HEK293 (cell line): ENCODE measurements at regions of chr14 and their contacts with region 1.

Region 1: GRCh38 chr14:20530771-20531571 is 25.6 kb downstream of the RNASE10 start:
- H3K4me3 ChIP-seq: no peak overlapping the region
- H3K27ac ChIP-seq: no peak overlapping the region
- H3K4me1 ChIP-seq: no peaks in the 10 kb centered on the region
- CTCF ChIP-seq: peak; percentile 55

Region 2: GRCh38 chr14:20400965-20401593 is 129.9 kb before region 1 on chr14:
- CTCF ChIA-PET with region 1: no interaction called
- POLR2A ChIA-PET with region 1: no interaction called
- H3K4me3 ChIP-seq: no peak overlapping the region
- H3K27ac ChIP-seq: no peak overlapping the region
- H3K4me1 ChIP-seq: no peaks in the 10 kb centered on the region
- CTCF ChIP-seq: no peak

Region 3: GRCh38 chr14:20546877-20547276 is 15.9 kb after region 1 on chr14:
- CTCF ChIA-PET with region 1: interaction called, 17 read pairs
- POLR2A ChIA-PET with region 1: no interaction called
- H3K4me3 ChIP-seq: no peak overlapping the region
- H3K27ac ChIP-seq: no peak overlapping the region
- H3K4me1 ChIP-seq: no peaks in the 10 kb centered on the region
- CTCF ChIP-seq: no peak

Region 4: DNA sequence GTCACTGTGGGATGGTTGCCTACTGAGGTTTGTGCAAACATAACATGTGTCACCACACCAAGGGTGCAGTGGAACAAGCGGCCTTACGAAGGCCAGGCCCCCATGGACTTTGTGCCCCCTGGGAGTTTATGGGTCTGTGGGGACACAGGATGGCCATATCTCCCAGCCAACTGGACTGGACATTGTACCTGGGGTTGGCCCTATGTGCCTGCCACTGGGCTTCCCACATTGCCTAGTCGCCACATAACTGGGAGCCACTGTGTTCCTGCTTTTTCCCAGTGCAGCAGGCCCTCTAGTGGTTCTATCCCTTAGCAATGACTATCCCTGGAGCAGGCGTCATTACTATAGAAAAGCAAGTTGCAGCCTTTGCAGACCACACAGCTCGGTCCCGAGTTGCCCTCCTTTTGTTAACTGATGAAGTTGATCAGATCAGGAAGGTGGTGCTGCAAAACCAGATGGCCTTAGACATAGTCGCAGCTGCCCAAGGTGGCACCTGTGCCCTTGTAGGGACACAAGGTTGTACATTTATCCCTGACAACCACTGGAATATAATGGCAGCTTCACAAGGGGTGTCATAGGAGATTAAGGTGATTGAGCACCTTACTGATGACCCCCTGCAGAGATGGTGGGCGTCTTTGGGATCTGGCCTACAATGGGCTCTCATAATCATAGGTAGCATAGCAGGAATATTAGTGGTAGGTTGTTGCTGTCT is 75.4 kb after region 1 on chr14:
- CTCF ChIA-PET with region 1: interaction called, 18 read pairs
- POLR2A ChIA-PET with region 1: no interaction called
- H3K4me3 ChIP-seq: no peak overlapping the region
- H3K27ac ChIP-seq: no peak overlapping the region
- H3K4me1 ChIP-seq: peaks cover 4% of the 10 kb centered on the region; the same call in 1 of the 2 replicates
- CTCF ChIP-seq: peak; percentile 39; the same call in 1 of the 2 replicates

Region 5: DNA sequence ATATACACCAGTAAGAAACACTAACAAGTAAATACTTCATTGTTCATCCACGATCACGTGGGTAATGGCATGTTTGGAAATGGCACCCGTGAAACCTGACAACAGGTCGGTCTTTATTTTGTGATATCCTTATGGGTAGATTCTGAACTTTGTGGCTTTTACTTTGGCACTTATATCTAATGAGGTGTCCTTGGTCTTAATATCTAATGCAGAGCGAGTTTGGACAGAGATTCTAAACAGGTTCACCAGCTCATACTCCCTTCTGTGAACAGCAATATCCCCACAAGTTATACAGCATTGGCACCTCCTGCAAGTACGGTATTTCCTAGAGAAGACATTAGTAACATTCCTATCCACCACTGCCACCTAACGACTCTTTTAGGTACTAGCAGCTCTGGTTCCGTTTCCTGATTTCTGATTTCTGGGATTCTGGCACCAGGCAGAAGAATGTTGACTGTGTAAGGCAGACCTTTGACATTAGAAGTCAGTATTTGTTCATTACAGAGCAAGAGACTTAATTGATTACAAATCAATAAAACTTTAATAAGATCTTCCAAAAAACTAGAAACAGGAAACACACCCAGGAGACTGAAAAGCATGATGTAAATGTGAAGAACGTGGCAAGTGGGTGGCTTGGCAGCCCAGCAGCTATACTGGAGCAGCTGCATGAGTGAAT is 160.0 kb after region 1 on chr14:
- CTCF ChIA-PET with region 1: interaction called, 14 read pairs
- POLR2A ChIA-PET with region 1: no interaction called
- H3K4me3 ChIP-seq: no peak overlapping the region
- H3K27ac ChIP-seq: no peak overlapping the region
- H3K4me1 ChIP-seq: no peaks in the 10 kb centered on the region
- CTCF ChIP-seq: peak; percentile 53